ENCODE measurements at regions of chr11 and their contacts with region 1.

Region 1: GRCh38 chr11:111540114-111540936 is at the start of gene LAYN:
- DNase-seq: peak in 1 of 2 experiments; percentile 68
- H3K4me3 ChIP-seq: peak within 1 kb of the TSS; percentile 57
- H3K27ac ChIP-seq: no peak within 1 kb of the TSS
- H3K4me1 ChIP-seq: peaks cover 22% of the 10 kb centered on the region
- H3K27me3 ChIP-seq: no peaks in the 10 kb centered on the region
- CTCF ChIP-seq: no peak
- total RNA-seq, gene LAYN: 19.9 and 22.2 TPM in 2 replicates

Region 2: GRCh38 chr11:111359223-111360149 is 180.8 kb before region 1 on chr11:
- CTCF ChIA-PET with region 1: no interaction called
- POLR2A ChIA-PET with region 1: no interaction called
- intact Hi-C with region 1: no loop called
- DNase-seq: no peak
- H3K4me3 ChIP-seq: no peak overlapping the region
- H3K27ac ChIP-seq: peak overlapping the region; percentile 75; the same call in 1 of the 2 replicates
- H3K4me1 ChIP-seq: peaks cover 36% of the 10 kb centered on the region
- H3K27me3 ChIP-seq: no peaks in the 10 kb centered on the region
- CTCF ChIP-seq: peak; percentile 39; the same call in 1 of the 2 replicates

Region 3: GRCh38 chr11:111469200-111469599 is 71.1 kb before region 1 on chr11:
- CTCF ChIA-PET with region 1: no interaction called
- POLR2A ChIA-PET with region 1: no interaction called
- intact Hi-C with region 1: no loop called
- DNase-seq: no peak
- H3K4me3 ChIP-seq: no peak overlapping the region
- H3K27ac ChIP-seq: no peak overlapping the region
- H3K4me1 ChIP-seq: peaks cover 12% of the 10 kb centered on the region; the same call in 1 of the 2 replicates
- H3K27me3 ChIP-seq: no peaks in the 10 kb centered on the region
- CTCF ChIP-seq: no peak

Region 4: GRCh38 chr11:111512296-111513239 is 27.8 kb before region 1 on chr11 and contains the start of gene BTG4:
- CTCF ChIA-PET with region 1: no interaction called
- POLR2A ChIA-PET with region 1: interaction called, 5 read pairs
- intact Hi-C with region 1: loop called (anchors 2 kb)
- DNase-seq: no peak
- H3K4me3 ChIP-seq: peak within 1 kb of the TSS; percentile 70
- H3K27ac ChIP-seq: no peak within 1 kb of the TSS
- H3K4me1 ChIP-seq: no peaks in the 10 kb centered on the region
- H3K27me3 ChIP-seq: no peaks in the 10 kb centered on the region
- CTCF ChIP-seq: no peak
- total RNA-seq, gene BTG4: not detected in 2 replicates

Region 5: GRCh38 chr11:111652184-111652583 is 111.9 kb after region 1 on chr11:
- CTCF ChIA-PET with region 1: no interaction called
- POLR2A ChIA-PET with region 1: no interaction called
- intact Hi-C with region 1: no loop called
- DNase-seq: no peak
- H3K4me3 ChIP-seq: no peak overlapping the region
- H3K27ac ChIP-seq: no peak overlapping the region
- H3K4me1 ChIP-seq: peaks cover 13% of the 10 kb centered on the region; the same call in 1 of the 2 replicates
- H3K27me3 ChIP-seq: no peaks in the 10 kb centered on the region
- CTCF ChIP-seq: no peak

Region 6: GRCh38 chr11:111761036-111761435 is 220.7 kb after region 1 on chr11:
- CTCF ChIA-PET with region 1: no interaction called
- POLR2A ChIA-PET with region 1: no interaction called
- intact Hi-C with region 1: no loop called
- DNase-seq: no peak
- H3K4me3 ChIP-seq: no peak overlapping the region
- H3K27ac ChIP-seq: no peak overlapping the region
- H3K4me1 ChIP-seq: peaks cover 16% of the 10 kb centered on the region
- H3K27me3 ChIP-seq: no peaks in the 10 kb centered on the region
- CTCF ChIP-seq: no peak

Measured in PC-9 (cell line).